Mammary epithelial cell (primary cell): ENCODE measurements at regions of chr4 and their contacts with region 1.

Region 1: GRCh38 chr4:145507636-145508035 is 26.0 kb downstream of the SMAD1 start:
- DNase-seq: peak; percentile 81
- H3K4me3 ChIP-seq: peak overlapping the region in 2 of 3 experiments; percentile 36 to 47
- H3K27ac ChIP-seq: peak overlapping the region; percentile 88
- H3K4me1 ChIP-seq: peaks cover 7% of the 10 kb centered on the region
- H3K27me3 ChIP-seq: no peaks in the 10 kb centered on the region
- CTCF ChIP-seq: no peak

Region 2: DNA sequence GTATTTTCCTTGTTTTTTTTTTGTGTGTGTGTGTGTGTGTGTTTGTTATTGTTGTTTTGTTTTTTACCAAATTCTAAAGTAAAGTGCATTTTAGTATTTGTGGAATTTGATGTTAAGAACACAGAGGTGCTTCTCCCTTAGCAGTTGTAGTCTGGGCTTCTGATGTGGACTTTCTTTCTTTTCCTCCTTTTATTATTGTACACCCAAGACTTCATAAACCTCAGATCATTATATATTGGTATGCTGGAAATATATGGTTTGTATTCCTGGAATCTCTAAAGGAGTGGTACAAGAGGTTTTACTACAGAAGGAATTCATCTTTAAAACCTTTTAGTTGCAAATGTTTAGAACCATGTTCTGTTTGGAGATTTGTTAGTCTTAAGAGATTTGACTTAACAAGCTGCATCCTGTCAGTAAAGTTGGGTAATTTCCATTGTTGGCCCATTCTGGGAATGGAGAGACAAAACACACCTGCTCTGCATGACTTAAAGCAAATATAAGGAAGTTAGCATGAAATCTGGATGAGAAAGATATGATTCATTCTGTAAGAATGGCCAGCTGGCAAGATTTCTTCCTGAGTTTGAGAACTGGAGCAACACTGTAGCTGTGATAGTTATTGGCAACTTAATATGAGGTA is 38.0 kb after region 1 on chr4:
- CTCF ChIA-PET with region 1: no interaction called
- dilution Hi-C with region 1: no loop called
- in situ Hi-C with region 1: no loop called
- intact Hi-C with region 1: loop called (anchors 1 kb)
- DNase-seq: peak; percentile 97
- H3K4me3 ChIP-seq: peak overlapping the region in 1 of 3 experiments; percentile 26
- H3K27ac ChIP-seq: peak overlapping the region; percentile 87
- H3K4me1 ChIP-seq: peaks cover 30% of the 10 kb centered on the region
- H3K27me3 ChIP-seq: no peaks in the 10 kb centered on the region
- CTCF ChIP-seq: no peak